ENCODE measurements at regions of chr4 and their contacts with region 1.

Region 1: DNA sequence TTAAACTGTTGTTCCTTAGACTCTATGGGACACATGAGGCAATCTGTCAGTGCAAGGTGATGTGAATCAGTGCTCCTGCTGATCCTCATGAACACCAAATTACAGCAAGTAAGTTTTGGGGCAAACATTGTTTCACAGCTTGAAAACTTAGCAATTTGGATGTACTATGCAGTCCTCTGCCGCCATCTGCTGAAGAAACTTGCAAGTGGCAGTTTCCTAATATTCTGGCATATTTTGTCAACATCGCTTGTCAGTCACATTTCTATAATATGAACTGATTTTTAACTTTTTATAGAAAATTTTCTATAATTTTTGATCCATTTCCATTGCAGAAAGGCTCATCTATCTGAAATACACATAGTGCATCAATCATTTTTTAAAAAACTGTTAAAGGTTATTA is 56.3 kb downstream of the ZAR1 start:
- DNase-seq: peak in 3 of 4 experiments; percentile 17 to 67 (median 21)
- ATAC-seq: peak; percentile 77
- H3K4me3 ChIP-seq: no peak overlapping the region
- H3K27ac ChIP-seq: no peak overlapping the region
- H3K4me1 ChIP-seq: no peaks in the 10 kb centered on the region
- H3K27me3 ChIP-seq: no peaks in the 10 kb centered on the region
- CTCF ChIP-seq: peak; percentile 73 to 93 (median 76)
- EP300 ChIP-seq: no peak
- POLR2A ChIP-seq: no peak
- RAD21 ChIP-seq: peak; percentile 85 to 93

Region 2: DNA sequence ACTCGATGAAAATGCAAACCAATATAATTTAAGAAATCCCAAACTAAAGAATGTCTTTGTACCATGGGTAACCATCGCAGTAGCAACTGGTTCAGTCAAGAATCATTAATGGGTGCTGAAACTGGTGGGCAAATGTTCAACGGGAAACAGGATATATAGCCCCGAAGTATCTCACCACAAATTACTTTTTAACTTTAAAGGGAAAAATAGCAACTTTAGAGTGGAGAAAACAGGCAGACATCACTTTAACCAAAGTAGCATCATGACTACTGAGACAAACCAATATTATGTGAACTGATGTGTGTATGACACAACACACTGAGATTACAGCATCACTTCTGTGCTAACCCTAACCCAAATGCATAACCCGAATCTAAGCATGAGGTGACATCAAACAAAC is 238.8 kb before region 1 on chr4:
- CTCF ChIA-PET with region 1: no interaction called
- POLR2A ChIA-PET with region 1: no interaction called
- in situ Hi-C with region 1: loop called (anchors 10 kb)
- intact Hi-C with region 1: no loop called
- DNase-seq: no peak
- ATAC-seq: no peak
- H3K4me3 ChIP-seq: no peak overlapping the region
- H3K27ac ChIP-seq: no peak overlapping the region
- H3K4me1 ChIP-seq: peaks cover 0 to 2% of the 10 kb centered on the region in 2 experiments; a peak in 2 of 5 replicates
- H3K27me3 ChIP-seq: no peaks in the 10 kb centered on the region
- CTCF ChIP-seq: no peak
- EP300 ChIP-seq: no peak
- POLR2A ChIP-seq: no peak
- RAD21 ChIP-seq: no peak

Region 3: DNA sequence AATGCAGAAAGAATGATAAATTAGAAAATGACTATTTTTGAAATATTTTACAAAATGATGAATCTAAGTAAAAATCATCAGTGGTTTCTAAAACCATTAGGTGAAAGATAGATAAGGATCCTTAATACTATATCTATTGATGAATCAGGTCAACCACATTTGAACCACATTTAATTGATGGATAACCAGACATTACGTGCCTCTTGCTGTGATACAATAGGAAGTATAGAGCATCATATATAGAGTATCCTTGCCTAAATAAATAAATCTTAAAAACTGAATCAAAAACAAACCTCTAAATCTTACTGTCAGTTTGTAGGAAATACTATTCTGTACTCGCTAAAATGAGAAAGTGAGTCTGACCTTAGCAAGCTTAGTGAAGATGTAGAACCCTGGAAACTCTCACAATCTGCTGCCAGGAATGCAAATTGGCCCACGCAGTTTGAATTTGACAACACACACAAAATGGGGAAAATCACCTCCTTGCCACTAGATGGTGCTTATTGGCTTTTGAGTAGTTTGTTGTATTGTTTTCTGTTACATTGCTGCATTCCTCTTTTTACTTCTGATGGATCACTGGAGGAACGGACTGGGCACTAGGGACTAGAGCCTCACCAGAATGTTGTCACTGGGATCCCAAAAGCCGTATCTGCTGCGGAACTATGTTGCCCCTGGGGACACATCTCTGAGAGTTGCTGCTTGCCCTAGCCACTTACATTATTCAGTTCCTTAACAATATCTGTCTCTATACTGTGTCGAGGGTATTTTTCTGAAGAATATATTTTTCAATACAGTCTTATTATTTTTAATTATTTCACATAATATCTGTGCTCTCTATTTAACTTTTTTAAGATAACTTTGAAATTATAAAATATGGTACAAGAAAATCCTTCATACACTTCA is 230.4 kb before region 1 on chr4:
- CTCF ChIA-PET with region 1: no interaction called
- POLR2A ChIA-PET with region 1: no interaction called
- in situ Hi-C with region 1: no loop called
- intact Hi-C with region 1: loop called (anchors 2 kb)
- DNase-seq: peak; percentile 41 to 73 (median 46)
- ATAC-seq: peak; percentile 93
- H3K4me3 ChIP-seq: no peak overlapping the region
- H3K27ac ChIP-seq: no peak overlapping the region
- H3K4me1 ChIP-seq: no peaks in the 10 kb centered on the region; a peak in 1 of 5 replicates
- H3K27me3 ChIP-seq: no peaks in the 10 kb centered on the region
- CTCF ChIP-seq: peak; percentile 64 to 80 (median 77)
- EP300 ChIP-seq: 0 out of 2 replicates have a peak, but pooled peaks have one; percentile 24
- POLR2A ChIP-seq: no peak
- RAD21 ChIP-seq: peak; percentile 77 to 90

Region 4: DNA sequence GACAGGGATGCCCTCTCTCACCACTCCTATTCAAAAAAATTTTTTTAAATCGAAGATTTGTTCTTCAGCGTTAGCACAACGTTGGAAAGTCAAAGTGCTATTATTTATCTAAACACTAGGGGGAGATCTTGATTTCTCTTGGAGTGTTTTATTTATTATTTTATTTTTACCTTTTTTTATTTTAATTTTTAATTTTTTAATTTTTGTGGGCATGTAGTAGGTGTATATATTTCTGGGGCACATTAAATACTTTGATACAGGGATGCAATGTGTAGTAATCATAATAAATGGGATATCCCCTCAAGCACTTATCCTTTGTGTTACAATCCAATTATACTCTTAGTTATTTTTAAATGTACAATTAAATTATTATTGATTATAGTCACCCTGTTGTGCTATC is 100.6 kb before region 1 on chr4:
- CTCF ChIA-PET with region 1: interaction called, 10 read pairs
- POLR2A ChIA-PET with region 1: no interaction called
- in situ Hi-C with region 1: no loop called
- intact Hi-C with region 1: loop called (anchors 1 kb)
- DNase-seq: no peak
- ATAC-seq: no peak
- H3K4me3 ChIP-seq: no peak overlapping the region
- H3K27ac ChIP-seq: no peak overlapping the region
- H3K4me1 ChIP-seq: peaks cover 0 to 2% of the 10 kb centered on the region in 2 experiments; a peak in 3 of 5 replicates
- H3K27me3 ChIP-seq: no peaks in the 10 kb centered on the region
- CTCF ChIP-seq: peak in 2 of 3 experiments; percentile 15 to 66; a peak in 2 of 6 replicates
- EP300 ChIP-seq: no peak
- POLR2A ChIP-seq: no peak
- RAD21 ChIP-seq: peak; percentile 61 to 67